Right ventricle myocardium inferior (tissue), 1 donor: ENCODE measurements at regions of chr2 and their contacts with region 1.

Region 1: DNA sequence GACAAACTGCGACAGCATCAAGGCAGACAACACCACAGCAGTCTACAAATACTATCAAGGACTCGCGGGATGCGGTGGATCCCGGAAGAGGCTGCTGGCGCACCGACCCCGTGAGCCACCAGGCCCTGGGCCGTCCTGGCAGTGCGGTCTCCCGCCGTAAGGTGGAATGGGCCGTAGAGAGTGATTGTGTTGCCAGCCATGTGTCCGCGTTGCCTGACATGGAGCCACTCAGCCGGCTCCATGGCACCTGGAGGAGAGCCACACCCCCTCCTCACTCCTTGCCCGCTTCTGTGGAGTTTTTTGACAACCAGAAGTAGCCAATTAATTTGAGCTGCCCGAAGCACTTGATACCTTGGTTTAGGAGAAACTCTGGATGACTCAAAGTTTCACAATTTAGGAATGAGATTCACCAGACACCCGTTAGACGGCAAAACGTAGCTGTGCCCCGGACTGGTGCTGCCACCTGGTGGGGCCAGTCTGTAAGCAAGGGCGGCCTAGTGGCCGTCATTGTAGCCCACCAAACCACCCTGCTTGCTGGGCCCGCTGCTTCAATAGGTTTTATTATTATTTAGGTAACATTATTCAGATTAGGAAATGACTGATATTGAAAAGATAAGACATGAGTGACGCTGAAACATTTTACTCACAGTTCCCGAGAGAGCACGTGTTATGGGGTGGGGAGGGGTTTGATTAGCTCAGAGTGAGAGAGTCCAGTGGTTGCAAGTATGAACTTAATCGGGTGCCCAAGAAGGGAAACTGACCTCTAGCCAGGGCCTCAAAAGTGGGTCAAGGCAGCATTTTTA is 10.2 kb upstream of the IMP4 start:
- DNase-seq: peak; percentile 83
- ATAC-seq: peak; percentile 57

Region 2: DNA sequence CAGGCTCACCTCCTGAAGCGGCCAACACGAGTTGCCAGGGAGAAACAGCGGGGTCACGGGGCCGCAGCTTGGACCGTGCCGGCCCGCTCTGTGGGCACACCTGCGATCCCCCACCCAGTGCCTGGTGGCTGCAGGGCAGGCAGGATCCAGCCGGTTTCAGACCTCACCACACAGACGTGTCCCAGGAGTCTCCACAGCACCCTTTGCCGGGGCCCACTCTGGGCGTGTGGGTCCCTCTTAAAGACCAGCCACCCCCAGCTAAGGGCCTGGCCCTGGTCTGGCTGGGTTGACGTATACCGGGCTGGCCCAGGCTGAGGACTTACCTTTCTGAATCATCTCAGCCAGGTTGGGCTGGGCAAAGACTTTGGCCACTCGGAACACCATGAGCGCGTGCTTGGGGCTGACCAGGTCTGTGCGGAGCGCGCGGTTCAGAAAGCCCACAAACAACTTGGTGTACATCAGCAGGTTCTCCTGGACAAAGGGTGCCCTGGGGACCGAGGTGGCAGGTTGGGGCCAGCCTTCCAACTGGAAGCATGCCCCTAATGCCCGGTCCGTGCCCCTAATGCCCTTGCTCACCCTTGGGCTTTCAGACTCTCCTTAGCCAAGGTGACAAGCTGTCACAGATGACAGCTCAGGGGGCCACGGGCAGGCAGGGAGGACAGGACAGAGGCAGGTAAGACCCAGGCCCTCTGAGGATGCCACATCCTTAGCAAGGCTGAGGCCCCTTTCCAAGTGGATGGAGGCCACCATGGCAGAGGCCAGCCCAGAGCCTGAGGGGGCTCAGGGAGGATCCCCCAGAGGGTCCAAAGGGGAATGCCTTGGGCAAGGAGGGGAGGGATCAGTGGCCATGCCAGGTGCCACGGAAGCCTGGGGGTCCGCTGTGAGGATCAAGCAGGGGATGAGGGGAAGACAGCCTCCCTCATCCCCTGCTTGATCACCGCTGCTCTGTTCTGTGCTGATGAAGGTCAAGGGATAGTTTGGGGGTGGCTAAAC is 177.4 kb before region 1 on chr2:
- intact Hi-C with region 1: loop called (anchors 5 kb)
- DNase-seq: no peak
- ATAC-seq: no peak